ENCODE measurements at regions of chr16 and their contacts with region 1.

Region 1: DNA sequence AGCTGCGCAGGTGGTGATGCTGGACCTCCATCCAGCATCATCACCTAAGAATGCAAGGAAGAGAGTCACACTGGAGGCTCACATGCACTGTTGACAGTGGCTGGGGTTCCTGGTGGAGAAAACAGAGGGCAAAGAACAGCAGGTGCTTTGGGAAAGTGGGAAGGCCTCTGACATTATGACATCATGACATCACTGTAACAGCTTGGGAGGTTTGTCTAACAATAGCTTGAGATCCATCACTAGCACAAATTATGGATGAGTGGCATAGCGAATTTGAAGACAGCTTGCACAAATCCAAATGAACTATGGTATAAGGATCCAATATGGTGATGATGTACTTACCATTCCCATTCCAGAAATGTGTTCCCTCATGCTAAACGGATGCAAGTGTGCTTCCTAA is 226.5 kb upstream of the MPHOSPH6 start:
- DNase-seq: no peak
- H3K4me3 ChIP-seq: no peak overlapping the region
- H3K27ac ChIP-seq: no peak overlapping the region
- H3K4me1 ChIP-seq: no peaks in the 10 kb centered on the region
- H3K27me3 ChIP-seq: no peaks in the 10 kb centered on the region
- CTCF ChIP-seq: no peak

Region 2: DNA sequence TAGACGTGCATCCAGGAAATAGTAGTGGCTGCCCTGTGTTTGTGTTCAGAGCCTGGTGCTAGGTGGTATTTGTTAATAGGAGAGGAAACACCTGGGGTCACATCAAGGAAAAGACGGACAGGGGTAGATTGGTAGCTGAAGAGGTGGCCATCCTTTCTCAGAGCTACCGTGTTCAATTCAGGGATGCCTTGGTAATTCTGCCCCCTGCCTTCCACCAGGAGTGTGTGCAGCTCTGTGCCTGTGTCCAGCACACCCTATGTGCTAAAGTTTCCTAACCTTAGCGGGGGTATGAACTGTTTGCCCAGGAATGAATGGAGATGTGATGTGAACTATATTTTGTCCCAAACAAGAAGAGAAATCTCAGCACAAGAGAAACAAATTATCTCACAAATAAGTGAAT is 52.4 kb before region 1 on chr16:
- intact Hi-C with region 1: no loop called
- DNase-seq: no peak
- H3K4me3 ChIP-seq: no peak overlapping the region
- H3K27ac ChIP-seq: no peak overlapping the region
- H3K4me1 ChIP-seq: no peaks in the 10 kb centered on the region
- H3K27me3 ChIP-seq: no peaks in the 10 kb centered on the region
- CTCF ChIP-seq: peak; percentile 41 to 66 (median 51)

Region 3: DNA sequence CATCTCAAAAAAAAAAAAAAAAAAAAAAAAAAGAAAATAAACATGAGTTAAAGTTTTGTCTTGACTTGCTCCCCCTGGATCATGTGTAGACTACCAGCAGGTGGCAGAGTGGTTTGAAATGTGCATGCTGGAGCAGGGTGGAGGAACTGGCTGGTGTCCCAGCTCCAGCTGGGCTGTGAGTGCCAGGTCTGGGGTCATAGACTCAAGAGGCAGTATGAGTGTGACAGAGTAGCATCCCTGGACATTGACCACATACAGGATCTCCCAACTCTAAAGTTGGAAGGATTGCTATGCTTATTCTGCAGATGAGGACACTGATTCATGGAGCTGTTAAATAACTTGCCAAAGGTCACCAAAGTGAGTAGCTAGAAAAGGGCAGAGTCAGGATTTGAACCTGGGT is 28.5 kb before region 1 on chr16:
- intact Hi-C with region 1: loop called (anchors 1 kb)
- DNase-seq: no peak
- H3K4me3 ChIP-seq: no peak overlapping the region
- H3K27ac ChIP-seq: no peak overlapping the region
- H3K4me1 ChIP-seq: no peaks in the 10 kb centered on the region
- H3K27me3 ChIP-seq: no peaks in the 10 kb centered on the region
- CTCF ChIP-seq: peak in 1 of 3 experiments; percentile 21

Measured in ascending aorta (tissue), 2 donors.